GM12878 (cell line): ENCODE measurements at regions of chr3 and their contacts with region 1.

Region 1: GRCh38 chr3:157088601-157089454 is 71.1 kb downstream of the CCNL1 start:
- DNase-seq: peak; percentile 93
- ATAC-seq: peak; percentile 91
- H3K4me3 ChIP-seq: peak overlapping the region; percentile 52
- H3K27ac ChIP-seq: peak overlapping the region; percentile 97
- H3K4me1 ChIP-seq: peaks cover 53% of the 10 kb centered on the region
- H3K27me3 ChIP-seq: no peaks in the 10 kb centered on the region
- CTCF ChIP-seq: peak in 1 of 3 experiments; percentile 2; a peak in 1 of 6 replicates
- EP300 ChIP-seq: peak; percentile 41 to 58
- POLR2A ChIP-seq: peak; percentile 91
- RAD21 ChIP-seq: no peak

Region 2: DNA sequence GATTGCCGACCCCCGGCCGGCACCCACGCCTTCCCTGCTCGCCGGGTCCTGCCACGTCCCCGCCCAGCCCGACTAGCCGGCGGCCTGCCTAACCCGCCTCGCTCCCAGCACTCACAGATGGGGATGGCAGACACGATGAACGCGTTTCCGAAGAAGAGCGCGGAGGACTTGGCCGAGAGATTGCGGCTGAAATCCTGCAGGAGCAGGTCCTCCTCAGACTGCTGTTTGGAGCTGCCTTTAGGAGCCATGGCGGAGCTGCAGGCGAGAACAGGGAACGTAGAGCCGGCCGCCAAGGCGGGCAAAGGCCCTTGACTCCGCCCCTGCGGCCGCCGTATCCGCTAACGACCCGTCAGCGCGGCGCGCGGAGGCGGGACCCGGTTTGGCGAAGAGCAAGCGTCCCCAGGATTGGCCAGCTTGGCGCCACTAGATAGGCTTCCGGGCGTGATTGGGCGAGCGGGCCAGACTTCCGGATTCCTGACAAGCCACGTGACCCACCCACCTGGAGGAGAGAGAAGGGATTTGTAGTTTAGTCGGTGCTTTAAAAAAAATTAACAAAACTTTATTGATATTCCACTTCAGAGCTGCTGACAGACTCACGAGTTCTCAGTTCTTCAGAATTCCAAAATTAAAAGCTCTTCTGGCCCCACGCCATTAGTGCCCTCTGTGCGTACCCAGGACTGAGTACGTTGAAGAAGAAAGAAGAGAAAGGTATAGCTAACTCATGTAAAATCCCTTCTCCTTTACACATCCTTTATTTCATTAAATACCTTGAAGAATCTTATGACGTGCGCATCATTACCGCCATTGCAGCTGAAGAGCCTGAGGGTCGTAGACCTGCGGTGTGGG is 533.8 kb before region 1 on chr3 and contains the start of gene SSR3:
- CTCF ChIA-PET with region 1: interaction called, 4 read pairs
- POLR2A ChIA-PET with region 1: interaction called, 6 read pairs
- RAD21 ChIA-PET with region 1: interaction called, 16 read pairs
- SMC1A ChIA-PET with region 1: interaction called, 7 read pairs
- in situ Hi-C with region 1: no loop called
- intact Hi-C with region 1: loop called (anchors 5 kb)
- DNase-seq: peak; percentile 95
- ATAC-seq: peak; percentile 99
- H3K4me3 ChIP-seq: peak within 1 kb of the TSS; percentile 92
- H3K27ac ChIP-seq: peak within 1 kb of the TSS; percentile 83
- H3K4me1 ChIP-seq: peaks cover 2% of the 10 kb centered on the region; the same call in 1 of the 2 replicates
- H3K27me3 ChIP-seq: no peaks in the 10 kb centered on the region
- CTCF ChIP-seq: peak in 1 of 3 experiments; percentile 2; a peak in 1 of 6 replicates
- EP300 ChIP-seq: no peak; a peak in 1 of 4 replicates
- POLR2A ChIP-seq: peak; percentile 95
- RAD21 ChIP-seq: no peak
- polyA plus RNA-seq, gene SSR3: 278 to 345 TPM

Region 3: DNA sequence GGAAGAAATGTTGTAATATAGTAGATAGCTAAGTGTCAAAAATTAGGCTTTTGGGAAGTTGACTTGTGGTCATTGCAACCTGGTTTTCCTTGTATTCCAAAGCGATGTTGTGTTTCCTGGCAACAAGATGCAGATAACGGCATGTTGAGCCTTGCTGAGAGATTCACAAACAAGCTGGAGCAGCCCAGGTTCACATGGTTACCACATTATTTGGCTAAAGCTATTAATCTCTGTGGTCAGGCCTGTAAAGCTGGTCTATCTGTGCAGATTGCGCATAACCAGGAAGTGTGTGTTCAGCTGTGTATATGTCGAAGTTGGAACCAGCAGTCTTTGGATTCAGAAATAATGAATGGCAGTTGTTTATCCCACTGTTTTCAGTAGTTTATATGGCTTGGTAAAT is 407.8 kb before region 1 on chr3:
- CTCF ChIA-PET with region 1: interaction called, 199 read pairs
- POLR2A ChIA-PET with region 1: interaction called, 6 read pairs
- RAD21 ChIA-PET with region 1: interaction called, 29 read pairs
- SMC1A ChIA-PET with region 1: interaction called, 142 read pairs
- in situ Hi-C with region 1: loop called (anchors 5 kb)
- intact Hi-C with region 1: no loop called
- DNase-seq: no peak
- ATAC-seq: peak; percentile 76
- H3K4me3 ChIP-seq: peak overlapping the region; percentile 44
- H3K27ac ChIP-seq: peak overlapping the region; percentile 40
- H3K4me1 ChIP-seq: peaks cover 36% of the 10 kb centered on the region
- H3K27me3 ChIP-seq: no peaks in the 10 kb centered on the region
- CTCF ChIP-seq: no peak
- EP300 ChIP-seq: peak; percentile 33 to 90; a peak in 1 of 4 replicates
- POLR2A ChIP-seq: no peak
- RAD21 ChIP-seq: no peak

Region 4: DNA sequence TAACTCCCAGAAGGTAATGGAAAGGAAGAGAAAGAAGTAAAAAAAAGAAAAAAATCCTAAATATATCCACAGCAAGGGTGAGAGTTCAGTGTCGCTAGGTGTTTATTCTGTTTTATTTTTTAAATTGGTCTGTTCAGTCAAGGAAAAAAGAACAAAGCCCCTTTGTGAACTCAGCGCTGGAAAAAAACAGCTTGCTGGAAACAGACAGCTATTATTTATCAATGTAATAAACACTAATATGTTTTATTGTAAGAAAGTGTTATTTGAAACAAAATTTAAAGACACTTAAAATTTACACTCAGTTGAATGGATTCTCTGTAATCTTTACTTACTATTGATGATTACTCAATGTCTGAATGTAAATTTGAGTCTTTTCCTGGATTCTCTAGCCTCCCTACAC is 295.0 kb before region 1 on chr3:
- CTCF ChIA-PET with region 1: no interaction called
- POLR2A ChIA-PET with region 1: no interaction called
- RAD21 ChIA-PET with region 1: no interaction called
- SMC1A ChIA-PET with region 1: no interaction called
- in situ Hi-C with region 1: no loop called
- intact Hi-C with region 1: no loop called
- DNase-seq: no peak
- ATAC-seq: no peak
- H3K4me3 ChIP-seq: no peak overlapping the region
- H3K27ac ChIP-seq: no peak overlapping the region
- H3K4me1 ChIP-seq: peaks cover 7% of the 10 kb centered on the region
- H3K27me3 ChIP-seq: no peaks in the 10 kb centered on the region
- CTCF ChIP-seq: no peak
- EP300 ChIP-seq: no peak
- POLR2A ChIP-seq: no peak
- RAD21 ChIP-seq: no peak

Region 5: DNA sequence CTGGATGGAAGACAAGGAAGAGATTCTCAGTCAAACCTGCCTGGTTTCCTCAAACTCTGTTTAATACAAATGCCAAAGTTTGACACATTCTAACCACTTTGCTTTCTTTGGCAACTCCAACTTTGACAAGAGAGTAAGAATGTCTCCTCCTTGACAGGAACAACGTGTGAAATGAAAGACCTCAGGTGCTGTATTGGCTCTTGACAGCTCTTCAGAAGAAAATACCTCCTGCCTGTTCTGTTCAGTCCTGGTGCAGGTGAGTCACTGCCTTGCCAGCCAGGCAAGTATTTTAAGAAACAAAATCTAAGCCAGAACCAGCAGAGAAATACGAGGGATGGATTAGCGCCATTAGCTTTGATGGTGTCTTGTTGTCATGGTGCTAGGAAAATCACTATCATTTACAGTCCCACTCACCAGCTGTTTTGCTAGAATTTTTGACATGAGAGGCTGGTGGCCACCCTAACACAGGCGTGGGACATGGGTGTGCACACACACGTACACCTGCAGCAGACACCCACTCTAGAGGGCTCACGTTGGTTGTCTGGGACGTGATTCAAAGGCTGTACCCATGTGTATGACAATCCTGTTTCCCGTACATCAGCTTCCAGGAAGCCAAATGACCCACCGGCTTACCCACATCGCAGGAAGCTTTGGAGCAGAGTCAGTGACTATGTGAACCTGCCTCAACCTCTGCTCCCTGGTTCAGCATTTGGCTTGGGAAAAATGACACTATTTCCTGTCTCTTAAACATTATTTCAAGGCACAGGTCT is 10.7 kb after region 1 on chr3:
- CTCF ChIA-PET with region 1: interaction called, 144 read pairs
- POLR2A ChIA-PET with region 1: interaction called, 84 read pairs
- RAD21 ChIA-PET with region 1: interaction called, 119 read pairs
- SMC1A ChIA-PET with region 1: interaction called, 234 read pairs
- in situ Hi-C with region 1: no loop called
- intact Hi-C with region 1: no loop called
- DNase-seq: no peak
- ATAC-seq: no peak
- H3K4me3 ChIP-seq: no peak overlapping the region
- H3K27ac ChIP-seq: no peak overlapping the region
- H3K4me1 ChIP-seq: peaks cover 28% of the 10 kb centered on the region
- H3K27me3 ChIP-seq: no peaks in the 10 kb centered on the region
- CTCF ChIP-seq: no peak
- EP300 ChIP-seq: no peak
- POLR2A ChIP-seq: no peak
- RAD21 ChIP-seq: no peak

Region 6: DNA sequence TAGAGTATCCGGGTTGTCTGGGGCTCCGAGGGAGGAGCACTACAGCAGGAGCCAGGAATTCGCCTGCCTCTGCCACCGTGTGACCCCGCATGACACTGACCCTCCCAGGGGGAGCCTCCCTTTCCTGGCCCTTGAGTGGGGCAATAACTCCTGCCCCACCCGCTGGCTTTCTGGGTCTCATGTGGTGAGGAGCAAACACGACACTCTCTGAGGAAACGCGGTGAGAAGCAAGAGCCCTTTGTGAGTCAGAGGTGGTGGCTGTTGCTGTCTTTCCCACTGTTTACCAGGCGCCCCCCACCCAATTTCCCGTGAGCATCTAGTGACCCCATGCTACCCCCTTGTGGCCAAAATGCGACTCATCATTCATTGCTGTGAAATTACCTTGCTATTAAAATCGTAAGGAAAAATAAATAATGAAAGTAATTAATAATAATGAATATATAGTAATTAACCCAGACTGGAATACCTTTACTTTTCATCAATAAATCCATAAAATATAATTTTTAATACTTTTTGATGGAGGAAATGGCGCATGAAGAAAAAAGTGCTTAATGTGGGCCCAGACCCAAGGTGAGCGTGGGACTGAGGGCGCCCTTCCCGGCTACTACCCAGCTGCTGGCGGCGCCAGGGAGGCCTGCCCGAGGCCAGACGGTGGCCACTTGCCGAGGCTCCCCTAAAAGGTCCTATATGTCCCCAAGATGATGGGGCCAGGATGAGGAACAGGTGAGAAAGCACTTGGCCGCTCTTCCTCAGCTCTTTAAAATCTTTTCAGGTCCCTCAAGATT is 41.8 kb after region 1 on chr3:
- CTCF ChIA-PET with region 1: interaction called, 939 read pairs
- POLR2A ChIA-PET with region 1: interaction called, 15 read pairs
- RAD21 ChIA-PET with region 1: interaction called, 153 read pairs
- SMC1A ChIA-PET with region 1: interaction called, 98 read pairs
- in situ Hi-C with region 1: no loop called
- intact Hi-C with region 1: no loop called
- DNase-seq: no peak
- ATAC-seq: no peak; the same call in 2 of the 3 replicates
- H3K4me3 ChIP-seq: no peak overlapping the region
- H3K27ac ChIP-seq: peak overlapping the region; percentile 44
- H3K4me1 ChIP-seq: peaks cover 34% of the 10 kb centered on the region
- H3K27me3 ChIP-seq: no peaks in the 10 kb centered on the region
- CTCF ChIP-seq: peak; percentile 59 to 69 (median 65)
- EP300 ChIP-seq: no peak
- POLR2A ChIP-seq: no peak
- RAD21 ChIP-seq: peak; percentile 80

Region 7: GRCh38 chr3:157174649-157175498 is 86.0 kb after region 1 on chr3:
- CTCF ChIA-PET with region 1: interaction called, 5 read pairs
- POLR2A ChIA-PET with region 1: interaction called, 20 read pairs
- RAD21 ChIA-PET with region 1: interaction called, 9 read pairs
- SMC1A ChIA-PET with region 1: interaction called, 5 read pairs
- in situ Hi-C with region 1: no loop called
- intact Hi-C with region 1: no loop called
- DNase-seq: peak; percentile 97
- ATAC-seq: peak; percentile 94
- H3K4me3 ChIP-seq: peak overlapping the region; percentile 86
- H3K27ac ChIP-seq: peak overlapping the region; percentile 97
- H3K4me1 ChIP-seq: peaks cover 4% of the 10 kb centered on the region; the same call in 1 of the 2 replicates
- H3K27me3 ChIP-seq: no peaks in the 10 kb centered on the region
- CTCF ChIP-seq: no peak
- EP300 ChIP-seq: peak; percentile 42 to 77; a peak in 3 of 4 replicates
- POLR2A ChIP-seq: peak; percentile 97
- RAD21 ChIP-seq: no peak